ENCODE measurements at regions of chr22 and their contacts with region 1.

Region 1: GRCh38 chr22:35930933-35931332 is 97.7 kb downstream of the RBFOX2 start:
- DNase-seq: no peak
- H3K4me3 ChIP-seq: no peak overlapping the region
- H3K27ac ChIP-seq: peak overlapping the region in 1 of 59 donors; percentile 2
- H3K27me3 ChIP-seq: no peaks in the 10 kb centered on the region
- CTCF ChIP-seq: peak in 55 of 56 donors; percentile 46 to 84 (median 70)

Region 2: GRCh38 chr22:36028646-36029405 is 97.9 kb after region 1 on chr22 and contains the start of gene RBFOX2:
- intact Hi-C with region 1: loop called in 1 of 2 experiments (anchors 5 kb)
- DNase-seq: peak; percentile 92 to 96 (median 94)
- H3K4me3 ChIP-seq: peak within 1 kb of the TSS; percentile 58 to 93 (median 80)
- H3K27ac ChIP-seq: peak within 1 kb of the TSS; percentile 3 to 93 (median 84)
- H3K27me3 ChIP-seq: no peaks in the 10 kb centered on the region
- CTCF ChIP-seq: peak in 20 of 56 donors; percentile 3 to 53 (median 24)
- total RNA-seq, gene RBFOX2: 65.0 to 238 (median 170) TPM

Region 3: DNA sequence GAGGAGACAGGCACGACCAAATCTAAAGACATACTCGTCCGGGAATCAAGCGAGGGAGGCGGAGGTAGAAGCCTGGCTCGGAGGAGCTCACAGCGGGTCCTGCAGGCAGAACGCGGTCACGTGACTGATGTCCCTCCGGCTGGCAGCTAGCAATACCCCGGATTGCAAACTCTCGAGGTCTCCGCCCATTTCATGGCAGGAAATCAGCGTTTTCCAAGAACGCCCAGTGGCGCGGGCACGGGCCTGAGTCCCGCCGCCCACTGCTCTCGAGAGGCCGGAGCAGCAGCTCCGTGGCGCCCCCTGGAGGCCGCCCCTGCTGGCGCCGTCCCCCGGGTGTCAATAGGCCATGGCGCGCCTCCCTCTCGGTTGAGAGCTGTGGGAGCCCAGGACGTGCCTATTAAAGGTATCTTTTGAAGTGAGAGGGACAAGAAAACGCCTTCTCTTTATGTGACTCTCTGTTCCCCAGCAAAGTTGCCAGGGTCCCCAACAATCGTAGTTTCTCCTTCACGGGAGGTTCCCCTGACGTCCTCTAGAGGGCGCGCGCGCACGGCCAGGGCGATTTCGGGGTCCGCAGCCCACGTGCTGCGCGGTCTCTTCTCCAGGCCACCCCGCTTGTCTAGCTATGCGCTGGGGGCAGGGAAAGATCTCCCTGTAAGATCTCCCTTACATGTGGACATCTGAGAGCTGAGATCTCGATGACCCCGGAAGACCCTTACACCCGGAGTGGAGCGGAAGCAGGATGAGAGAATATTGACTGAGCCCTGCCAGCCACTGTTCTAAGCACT is 135.0 kb after region 1 on chr22:
- intact Hi-C with region 1: loop called (anchors 2 to 5 kb)
- DNase-seq: peak; percentile 80 to 89 (median 86)
- H3K4me3 ChIP-seq: peak overlapping the region; percentile 44 to 89 (median 62)
- H3K27ac ChIP-seq: peak overlapping the region; percentile 7 to 94 (median 83)
- H3K27me3 ChIP-seq: no peaks in the 10 kb centered on the region
- CTCF ChIP-seq: peak; percentile 94 to 100 (median 99)

Region 4: GRCh38 chr22:36134182-36134581 is 203.2 kb after region 1 on chr22:
- intact Hi-C with region 1: loop called in 1 of 2 experiments (anchors 5 kb)
- DNase-seq: no peak
- H3K4me3 ChIP-seq: no peak overlapping the region
- H3K27ac ChIP-seq: no peak overlapping the region
- H3K27me3 ChIP-seq: no peaks in the 10 kb centered on the region
- CTCF ChIP-seq: no peak

Measured in dorsolateral prefrontal cortex (tissue), 120 donors.